ENCODE measurements at regions of chr12 and their contacts with region 1.

Region 1: DNA sequence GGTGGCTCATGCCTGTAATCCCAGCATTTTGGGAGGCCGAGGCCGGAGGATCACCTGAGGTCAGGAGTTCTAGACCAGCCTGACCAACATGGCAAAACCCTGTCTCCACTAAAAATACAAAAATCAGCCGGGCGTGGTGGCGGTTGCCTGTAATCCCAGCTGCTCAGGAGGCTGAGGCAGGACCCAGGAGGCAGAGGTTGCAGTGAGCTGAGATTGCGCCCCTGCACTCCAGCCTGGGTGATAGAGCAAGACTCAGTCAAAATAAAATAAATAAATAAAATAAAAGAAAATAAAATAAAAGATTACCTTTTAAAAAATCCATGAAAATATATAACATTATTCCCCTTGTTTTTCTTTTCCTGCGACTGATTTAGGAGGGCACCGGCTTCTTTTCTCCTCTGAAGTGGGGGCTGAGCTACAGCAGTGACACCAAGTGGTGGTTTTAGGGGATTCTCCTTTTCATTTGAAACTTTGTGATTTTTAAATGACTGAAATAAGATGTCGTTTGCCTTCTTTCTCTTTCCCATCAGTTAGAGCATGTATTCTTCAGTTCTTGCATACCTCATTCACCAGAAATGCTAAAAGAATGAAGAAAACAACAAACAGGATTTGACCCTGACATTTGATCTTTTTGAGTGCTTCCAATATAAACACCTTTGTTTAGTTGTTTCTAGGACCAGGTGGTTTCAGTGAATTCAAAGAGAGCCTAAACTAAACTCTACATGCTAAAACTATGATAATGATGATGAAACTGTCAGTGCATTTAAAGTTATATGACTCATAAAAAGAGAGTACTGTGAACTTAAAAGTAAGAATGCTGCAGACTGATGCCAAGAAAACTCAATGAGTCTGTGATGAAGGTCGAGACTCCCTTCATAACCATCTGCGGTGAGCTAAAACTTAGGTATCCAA is 22.6 kb upstream of the PKP2 start:
- DNase-seq: no peak
- H3K4me3 Mint-ChIP-seq: peak overlapping the region; percentile 25
- H3K27ac Mint-ChIP-seq: peak overlapping the region; percentile 94
- H3K4me1 Mint-ChIP-seq: peaks cover 34% of the 10 kb centered on the region
- H3K27me3 Mint-ChIP-seq: no peaks in the 10 kb centered on the region
- CTCF ChIP-seq: peak; percentile 20

Region 2: DNA sequence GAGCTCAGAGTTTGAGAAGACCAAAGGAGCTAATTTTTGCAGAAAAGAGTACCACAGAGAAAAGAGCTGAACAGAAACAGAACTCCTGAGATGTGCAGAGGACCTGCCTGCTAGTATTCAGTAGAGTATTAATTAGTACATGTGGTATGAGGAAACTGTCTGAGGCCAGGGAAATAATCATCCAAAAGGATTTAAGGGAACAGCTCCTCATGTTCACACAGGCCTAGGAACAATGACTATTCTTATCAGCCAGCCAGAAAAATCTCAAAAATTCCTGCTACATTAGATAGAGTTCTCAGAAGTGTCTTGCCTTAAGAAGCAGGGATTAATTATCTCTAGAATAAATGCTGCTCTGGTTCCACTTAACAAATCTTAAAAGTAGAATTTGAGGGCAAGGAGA is 59.0 kb before region 1 on chr12:
- CTCF ChIA-PET with region 1: no interaction called
- intact Hi-C with region 1: loop called (anchors 10 kb)
- DNase-seq: no peak
- H3K4me3 Mint-ChIP-seq: no peak overlapping the region
- H3K27ac Mint-ChIP-seq: no peak overlapping the region
- H3K4me1 Mint-ChIP-seq: peaks cover 11% of the 10 kb centered on the region
- H3K27me3 Mint-ChIP-seq: no peaks in the 10 kb centered on the region
- CTCF ChIP-seq: no peak

Region 3: GRCh38 chr12:32895688-32896431 is 23.3 kb before region 1 on chr12:
- CTCF ChIA-PET with region 1: interaction called, 8 read pairs
- intact Hi-C with region 1: loop called (anchors 2 kb)
- DNase-seq: peak; percentile 65
- H3K4me3 Mint-ChIP-seq: peak overlapping the region; percentile 87
- H3K27ac Mint-ChIP-seq: peak overlapping the region; percentile 87
- H3K4me1 Mint-ChIP-seq: peaks cover 57% of the 10 kb centered on the region
- H3K27me3 Mint-ChIP-seq: no peaks in the 10 kb centered on the region
- CTCF ChIP-seq: no peak

Region 4: GRCh38 chr12:33253178-33253577 is 334.0 kb after region 1 on chr12:
- CTCF ChIA-PET with region 1: no interaction called
- intact Hi-C with region 1: no loop called
- DNase-seq: no peak
- H3K4me3 Mint-ChIP-seq: no peak overlapping the region
- H3K27ac Mint-ChIP-seq: no peak overlapping the region
- H3K4me1 Mint-ChIP-seq: peaks cover 11% of the 10 kb centered on the region
- H3K27me3 Mint-ChIP-seq: no peaks in the 10 kb centered on the region
- CTCF ChIP-seq: no peak

Measured in Calu3 (cell line).